ENCODE measurements at regions of chr7 and their contacts with region 1.

Region 1: DNA sequence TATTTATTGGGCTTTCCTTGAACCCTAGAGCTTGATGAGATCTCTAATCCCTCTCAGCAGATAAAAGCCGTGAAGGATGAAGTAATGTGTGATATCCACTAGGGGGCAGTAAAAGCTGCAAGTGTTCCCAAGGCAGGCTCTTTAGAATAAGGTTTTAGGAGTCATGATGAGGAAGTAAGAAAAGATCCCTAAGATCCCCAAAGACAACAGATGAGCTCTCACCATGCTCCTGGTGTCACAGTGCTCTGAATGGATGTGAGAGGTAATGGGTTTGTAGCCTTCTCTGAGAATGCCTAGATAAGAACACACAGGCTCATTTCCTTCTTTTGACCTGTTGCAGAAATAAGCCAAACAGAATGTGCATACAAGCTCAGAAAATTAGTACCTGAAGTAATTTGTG is 70.4 kb upstream of the ITPRID1 start:
- H3K4me3 Mint-ChIP-seq: no peak overlapping the region
- H3K27ac Mint-ChIP-seq: no peak overlapping the region
- H3K4me1 Mint-ChIP-seq: no peaks in the 10 kb centered on the region
- H3K27me3 Mint-ChIP-seq: peaks cover 10% of the 10 kb centered on the region

Region 2: DNA sequence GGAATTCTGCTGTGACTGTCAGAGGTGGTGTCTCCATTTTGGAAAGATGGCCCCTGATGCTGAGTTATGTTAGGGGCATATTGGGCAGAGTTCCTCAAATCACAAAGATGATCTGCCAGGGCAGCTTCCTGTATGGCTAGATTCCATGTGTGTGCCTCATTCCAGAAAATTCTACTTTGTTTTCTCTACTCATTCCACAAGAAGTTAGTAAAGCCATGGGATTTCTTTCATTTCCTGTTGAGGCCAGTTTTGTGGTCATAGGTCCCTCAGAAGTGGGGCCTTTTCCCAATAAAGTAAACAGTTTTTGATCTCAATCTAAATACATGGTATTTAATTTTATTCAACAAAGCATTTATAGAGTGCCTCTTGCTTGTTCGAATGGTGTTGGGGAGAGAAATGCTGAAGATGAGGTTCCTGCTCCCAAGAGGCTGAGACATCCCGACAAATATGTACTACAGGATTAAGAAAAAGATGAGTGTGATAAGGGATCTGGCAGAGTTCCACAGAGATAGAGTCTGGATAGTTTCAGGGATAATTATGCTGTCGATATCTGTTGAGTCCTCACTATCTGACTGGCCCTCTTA is 639.3 kb before region 1 on chr7:
- intact Hi-C with region 1: no loop called
- H3K4me3 Mint-ChIP-seq: no peak overlapping the region
- H3K27ac Mint-ChIP-seq: no peak overlapping the region
- H3K4me1 Mint-ChIP-seq: peaks cover 30% of the 10 kb centered on the region
- H3K27me3 Mint-ChIP-seq: no peaks in the 10 kb centered on the region

Region 3: GRCh38 chr7:31373337-31374289 is 69.8 kb before region 1 on chr7:
- intact Hi-C with region 1: loop called (anchors 5 kb)
- H3K4me3 Mint-ChIP-seq: no peak overlapping the region
- H3K27ac Mint-ChIP-seq: no peak overlapping the region
- H3K4me1 Mint-ChIP-seq: no peaks in the 10 kb centered on the region
- H3K27me3 Mint-ChIP-seq: no peaks in the 10 kb centered on the region

Measured in dendritic cell treated with granulocyte-macrophage colony-stimulating factor and Interleukin-4, amounts not matched to agents 40 ng/mL and 50 ng/mL, for 4 days (primary cell).